Activated CD4-positive, alpha-beta T cell treated with anti-CD3 and anti-CD28 coated beads, Interleukin-2, amount 10 ng/mL, durations not matched to agents 24 days and 14 days (primary cell): ENCODE measurements at regions of chr3 and their contacts with region 1.

Region 1: DNA sequence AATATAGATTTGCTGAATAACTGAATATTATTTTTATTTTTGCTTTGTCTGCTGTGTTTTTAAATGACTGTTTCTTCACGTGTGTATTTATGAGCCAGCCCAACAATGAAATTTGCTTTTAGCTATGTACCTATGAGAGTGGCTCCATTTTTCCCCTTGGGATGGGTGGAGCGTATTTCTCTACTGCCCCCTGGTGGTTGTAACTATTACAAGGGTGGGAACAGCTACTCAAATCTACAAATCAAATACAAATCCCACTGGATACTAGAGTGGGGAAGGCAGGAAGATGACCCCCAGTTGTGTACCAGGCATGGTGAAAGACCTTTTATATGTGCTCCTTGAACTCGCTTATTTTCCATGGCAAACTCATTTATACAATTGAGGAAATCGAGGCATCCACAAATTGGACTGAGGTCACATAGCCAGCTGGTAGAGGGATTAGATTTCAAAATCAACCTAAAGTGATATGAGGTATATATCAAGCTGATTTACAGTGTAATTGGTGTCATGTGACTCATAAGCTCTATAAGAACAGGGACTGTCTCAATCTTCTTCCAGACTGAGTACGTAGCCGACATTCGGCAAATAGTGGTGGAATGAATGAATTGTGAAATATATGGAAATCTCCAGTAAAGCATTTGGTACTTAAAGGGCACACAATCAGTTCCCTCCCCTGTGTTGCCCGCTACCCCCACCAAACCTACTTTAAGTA is 69.5 kb upstream of the VEPH1 start:
- DNase-seq: peak; percentile 68
- H3K4me3 Mint-ChIP-seq: no peak overlapping the region
- H3K27ac Mint-ChIP-seq: no peak overlapping the region
- H3K4me1 Mint-ChIP-seq: no peaks in the 10 kb centered on the region
- H3K27me3 Mint-ChIP-seq: peaks cover 7% of the 10 kb centered on the region

Region 2: GRCh38 chr3:157532529-157533297 is 40.0 kb before region 1 on chr3:
- intact Hi-C with region 1: loop called (anchors 1 kb)
- DNase-seq: peak; percentile 64
- H3K4me3 Mint-ChIP-seq: no peak overlapping the region
- H3K27ac Mint-ChIP-seq: no peak overlapping the region
- H3K4me1 Mint-ChIP-seq: no peaks in the 10 kb centered on the region
- H3K27me3 Mint-ChIP-seq: peaks cover 7% of the 10 kb centered on the region